ENCODE measurements at regions of chr7 and their contacts with region 1.

Region 1: DNA sequence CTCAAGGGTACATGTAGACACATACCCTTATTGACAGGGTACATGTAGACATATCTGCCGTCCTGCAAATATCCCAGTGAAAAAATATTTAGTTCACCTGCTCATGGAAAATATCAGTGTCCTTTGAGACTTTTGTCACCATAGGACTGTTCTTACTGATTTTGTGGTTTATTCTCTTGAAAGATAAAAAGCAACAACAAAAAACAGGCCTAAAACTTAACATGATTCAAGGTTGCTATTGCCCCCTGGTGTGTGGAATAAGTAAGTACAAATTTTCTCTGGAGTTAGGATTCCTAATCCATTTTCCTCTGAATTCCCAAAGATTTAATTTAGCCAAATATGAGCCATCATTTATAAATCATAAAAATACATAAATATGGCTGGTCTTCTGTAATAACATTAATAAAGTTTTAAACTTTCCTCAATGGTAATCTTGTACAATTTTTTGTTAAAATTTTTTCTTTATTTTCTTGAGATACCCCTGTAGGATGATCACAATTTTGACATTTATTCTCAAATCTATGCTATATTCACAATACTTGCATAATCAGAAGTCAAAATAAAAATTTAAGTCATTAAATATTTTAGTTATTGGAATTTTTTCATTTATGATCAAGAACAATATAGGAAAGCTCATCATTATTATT is 741.4 kb upstream of the POT1 start:
- DNase-seq: peak; percentile 37
- ATAC-seq: peak; percentile 42
- H3K4me3 ChIP-seq: no peak overlapping the region
- H3K27ac ChIP-seq: no peak overlapping the region
- H3K4me1 ChIP-seq: no peaks in the 10 kb centered on the region
- H3K27me3 ChIP-seq: no peaks in the 10 kb centered on the region
- CTCF ChIP-seq: peak; percentile 80

Region 2: DNA sequence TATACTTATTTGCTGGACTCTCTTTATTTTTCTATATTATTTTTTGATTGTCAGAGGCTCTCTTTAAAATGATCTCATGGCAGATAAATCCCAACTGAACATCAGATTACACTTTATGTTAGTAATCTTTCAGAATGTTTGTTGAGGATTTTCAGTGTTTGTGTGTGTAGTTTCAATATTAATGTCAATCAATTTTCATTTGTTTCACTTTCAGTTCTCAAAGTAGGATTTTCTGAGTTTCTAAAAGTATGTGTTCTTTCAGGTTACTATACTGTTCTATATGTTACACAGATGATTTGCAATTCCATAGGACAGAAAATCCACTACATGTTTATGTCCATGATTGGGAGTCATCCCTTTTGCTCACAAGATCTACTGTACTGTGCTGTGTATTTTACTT is 429.5 kb before region 1 on chr7:
- CTCF ChIA-PET with region 1: no interaction called
- POLR2A ChIA-PET with region 1: no interaction called
- intact Hi-C with region 1: loop called (anchors 10 kb)
- DNase-seq: no peak
- ATAC-seq: no peak
- H3K4me3 ChIP-seq: no peak overlapping the region
- H3K27ac ChIP-seq: no peak overlapping the region
- H3K4me1 ChIP-seq: no peaks in the 10 kb centered on the region
- H3K27me3 ChIP-seq: no peaks in the 10 kb centered on the region
- CTCF ChIP-seq: no peak

Region 3: DNA sequence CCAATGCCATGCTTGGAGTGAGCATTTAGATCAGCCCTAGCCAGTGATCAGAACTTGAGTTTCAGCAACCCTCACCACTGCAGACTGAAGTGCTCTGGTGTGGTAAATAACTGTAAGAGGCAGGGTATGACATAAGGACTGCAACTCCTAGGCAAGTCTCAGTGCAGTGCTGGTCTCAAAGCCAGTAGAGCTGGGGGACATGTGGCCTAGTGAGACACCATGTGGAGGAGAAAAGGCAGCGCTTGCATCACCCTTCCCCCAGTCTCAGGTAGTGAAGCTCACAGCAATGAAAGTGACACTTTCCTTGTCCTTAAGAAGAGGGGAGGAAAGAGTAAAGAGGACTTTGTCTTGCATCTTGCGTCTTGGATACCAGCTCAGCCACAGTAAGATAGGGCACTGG is 354.6 kb before region 1 on chr7:
- CTCF ChIA-PET with region 1: no interaction called
- POLR2A ChIA-PET with region 1: no interaction called
- intact Hi-C with region 1: loop called (anchors 2 kb)
- DNase-seq: peak; percentile 56
- ATAC-seq: peak; percentile 99
- H3K4me3 ChIP-seq: no peak overlapping the region
- H3K27ac ChIP-seq: no peak overlapping the region
- H3K4me1 ChIP-seq: no peaks in the 10 kb centered on the region
- H3K27me3 ChIP-seq: no peaks in the 10 kb centered on the region
- CTCF ChIP-seq: peak; percentile 48

Region 4: GRCh38 chr7:125391921-125392320 is 279.1 kb before region 1 on chr7:
- CTCF ChIA-PET with region 1: no interaction called
- POLR2A ChIA-PET with region 1: no interaction called
- intact Hi-C with region 1: loop called (anchors 5 kb)
- DNase-seq: peak; percentile 44
- ATAC-seq: peak; percentile 91
- H3K4me3 ChIP-seq: no peak overlapping the region
- H3K27ac ChIP-seq: peak overlapping the region; percentile 37
- H3K4me1 ChIP-seq: peaks cover 13% of the 10 kb centered on the region; the same call in 1 of the 2 replicates
- H3K27me3 ChIP-seq: no peaks in the 10 kb centered on the region
- CTCF ChIP-seq: no peak

Region 5: GRCh38 chr7:125445836-125446235 is 225.2 kb before region 1 on chr7:
- CTCF ChIA-PET with region 1: no interaction called
- POLR2A ChIA-PET with region 1: no interaction called
- intact Hi-C with region 1: loop called (anchors 2 kb)
- DNase-seq: no peak
- ATAC-seq: no peak
- H3K4me3 ChIP-seq: no peak overlapping the region
- H3K27ac ChIP-seq: no peak overlapping the region
- H3K4me1 ChIP-seq: peaks cover 23% of the 10 kb centered on the region
- H3K27me3 ChIP-seq: no peaks in the 10 kb centered on the region
- CTCF ChIP-seq: no peak

Region 6: GRCh38 chr7:125568799-125569198 is 102.2 kb before region 1 on chr7:
- CTCF ChIA-PET with region 1: no interaction called
- POLR2A ChIA-PET with region 1: no interaction called
- intact Hi-C with region 1: loop called (anchors 5 kb)
- DNase-seq: no peak
- ATAC-seq: no peak
- H3K4me3 ChIP-seq: no peak overlapping the region
- H3K27ac ChIP-seq: no peak overlapping the region
- H3K4me1 ChIP-seq: no peaks in the 10 kb centered on the region
- H3K27me3 ChIP-seq: no peaks in the 10 kb centered on the region
- CTCF ChIP-seq: no peak

Measured in PC-3 (cell line).